CD14-positive monocyte (primary cell): ENCODE measurements at regions of chr11 and their contacts with region 1.

Region 1: GRCh38 chr11:86138958-86139357 is 70.1 kb upstream of the PICALM start:
- DNase-seq: peak; percentile 80 to 94 (median 85)
- H3K4me3 ChIP-seq: peak overlapping the region in 1 of 3 experiments; percentile 18
- H3K4me3 Mint-ChIP-seq: peak overlapping the region in 1 of 2 donors; percentile 58
- H3K27ac ChIP-seq: peak overlapping the region; percentile 3 to 93
- H3K27ac Mint-ChIP-seq: peak overlapping the region; percentile 92 to 99 (median 97)
- H3K4me1 ChIP-seq: peaks cover 98 to 100% of the 10 kb centered on the region in 2 donors
- H3K4me1 Mint-ChIP-seq: peaks cover 96% of the 10 kb centered on the region
- H3K27me3 ChIP-seq: no peaks in the 10 kb centered on the region
- H3K27me3 Mint-ChIP-seq: no peaks in the 10 kb centered on the region
- CTCF ChIP-seq: no peak

Region 2: GRCh38 chr11:86174101-86175046 is 35.4 kb after region 1 on chr11:
- intact Hi-C with region 1: loop called (anchors 5 kb)
- DNase-seq: no peak
- H3K4me3 ChIP-seq: no peak overlapping the region
- H3K4me3 Mint-ChIP-seq: no peak overlapping the region
- H3K27ac ChIP-seq: no peak overlapping the region
- H3K27ac Mint-ChIP-seq: peak overlapping the region in 1 of 7 donors; percentile 70
- H3K4me1 ChIP-seq: peaks cover 60% of the 10 kb centered on the region in 2 donors
- H3K4me1 Mint-ChIP-seq: peaks cover 2% of the 10 kb centered on the region
- H3K27me3 ChIP-seq: no peaks in the 10 kb centered on the region
- H3K27me3 Mint-ChIP-seq: peaks cover 0 to 4% (median 4%) of the 10 kb centered on the region in 3 donors
- CTCF ChIP-seq: no peak

Region 3: GRCh38 chr11:86202013-86202336 is 63.0 kb after region 1 on chr11:
- intact Hi-C with region 1: loop called (anchors 5 kb)
- DNase-seq: peak; percentile 62 to 73 (median 69)
- H3K4me3 ChIP-seq: peak overlapping the region; percentile 34 to 74 (median 71)
- H3K4me3 Mint-ChIP-seq: no peak overlapping the region
- H3K27ac ChIP-seq: peak overlapping the region; percentile 89 to 95
- H3K27ac Mint-ChIP-seq: no peak overlapping the region
- H3K4me1 ChIP-seq: peaks cover 64 to 78% of the 10 kb centered on the region in 2 donors
- H3K4me1 Mint-ChIP-seq: peaks cover 19% of the 10 kb centered on the region
- H3K27me3 ChIP-seq: no peaks in the 10 kb centered on the region
- H3K27me3 Mint-ChIP-seq: no peaks in the 10 kb centered on the region
- CTCF ChIP-seq: no peak

Region 4: DNA sequence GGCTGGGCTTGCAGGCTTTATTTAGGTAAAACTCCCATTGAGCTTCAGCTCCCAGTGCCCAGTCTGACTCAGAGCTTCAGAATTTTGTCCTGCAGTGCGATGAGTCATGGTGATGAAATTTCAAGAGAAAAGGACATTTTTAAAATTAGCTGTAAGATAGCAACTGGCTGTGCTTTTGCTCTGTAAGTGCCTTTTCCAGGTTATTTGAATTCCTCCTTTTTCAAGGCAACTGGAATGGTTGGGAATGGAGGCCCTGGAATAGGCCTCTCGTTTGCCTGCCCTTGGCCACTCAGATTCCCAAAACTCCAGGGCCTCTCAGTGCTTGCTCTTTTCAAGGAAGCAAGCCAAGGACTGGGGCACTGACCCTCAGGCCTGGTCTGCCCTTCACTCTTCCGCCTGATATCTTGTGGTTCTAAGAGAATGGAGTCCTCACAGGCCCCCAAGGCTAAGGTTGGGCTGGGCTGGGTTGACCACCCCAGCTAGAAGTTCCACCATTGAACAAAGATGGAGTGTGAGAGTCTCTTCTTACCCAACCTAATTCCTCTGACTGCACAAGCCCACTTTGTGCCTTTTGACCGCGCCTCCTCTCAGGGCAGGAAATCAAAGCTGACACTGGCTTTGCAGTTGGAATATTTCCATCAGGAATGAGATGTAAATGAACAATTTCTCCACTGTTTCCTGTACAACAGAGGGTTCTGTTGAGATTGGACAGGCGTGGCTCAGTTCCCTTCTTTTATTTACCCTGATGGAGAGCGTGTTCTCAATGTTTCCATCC is 601.9 kb after region 1 on chr11:
- intact Hi-C with region 1: no loop called
- DNase-seq: peak; percentile 41 to 80 (median 46)
- H3K4me3 ChIP-seq: no peak overlapping the region
- H3K4me3 Mint-ChIP-seq: no peak overlapping the region
- H3K27ac ChIP-seq: no peak overlapping the region
- H3K27ac Mint-ChIP-seq: peak overlapping the region in 5 of 7 donors; percentile 16 to 90 (median 79)
- H3K4me1 ChIP-seq: peaks cover 6 to 19% of the 10 kb centered on the region in 2 donors
- H3K4me1 Mint-ChIP-seq: peaks cover 21% of the 10 kb centered on the region
- H3K27me3 ChIP-seq: no peaks in the 10 kb centered on the region
- H3K27me3 Mint-ChIP-seq: peaks cover 1 to 2% (median 2%) of the 10 kb centered on the region in 3 donors
- CTCF ChIP-seq: no peak